ENCODE measurements at regions of chr11 and their contacts with region 1.

Region 1: DNA sequence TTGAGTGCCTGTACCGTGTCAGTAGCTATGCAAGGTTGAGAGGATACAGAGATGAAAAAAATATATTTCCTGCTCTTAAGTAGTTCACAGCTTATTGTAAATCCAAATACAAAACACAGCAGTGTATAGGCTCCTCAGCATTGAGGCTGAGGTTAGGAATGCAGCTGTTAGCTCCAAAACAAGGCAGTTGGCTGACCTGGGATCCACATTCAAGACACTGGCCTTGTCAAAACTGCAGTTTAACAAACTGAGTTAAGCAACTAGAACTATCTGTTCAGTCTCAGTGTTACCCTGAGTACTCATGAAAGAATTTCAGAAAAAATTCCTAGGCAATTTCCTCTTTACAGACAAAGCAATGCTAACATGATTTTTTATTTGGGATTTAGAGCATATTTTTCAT is 42.8 kb downstream of the REXO2 start:
- DNase-seq: peak; percentile 6
- H3K4me3 ChIP-seq: peak overlapping the region; percentile 24
- H3K27ac ChIP-seq: peak overlapping the region; percentile 35
- H3K4me1 ChIP-seq: peaks cover 23% of the 10 kb centered on the region
- CTCF ChIP-seq: no peak

Region 2: GRCh38 chr11:114340311-114341131 is 141.6 kb before region 1 on chr11:
- CTCF ChIA-PET with region 1: no interaction called
- POLR2A ChIA-PET with region 1: interaction called, 3 read pairs
- intact Hi-C with region 1: loop called (anchors 10 kb)
- DNase-seq: peak; percentile 72
- H3K4me3 ChIP-seq: no peak overlapping the region
- H3K27ac ChIP-seq: peak overlapping the region; percentile 39
- H3K4me1 ChIP-seq: peaks cover 10% of the 10 kb centered on the region
- CTCF ChIP-seq: peak; percentile 91

Region 3: GRCh38 chr11:114377612-114378267 is 104.4 kb before region 1 on chr11:
- CTCF ChIA-PET with region 1: no interaction called
- POLR2A ChIA-PET with region 1: no interaction called
- intact Hi-C with region 1: no loop called
- DNase-seq: no peak
- H3K4me3 ChIP-seq: no peak overlapping the region
- H3K27ac ChIP-seq: no peak overlapping the region
- H3K4me1 ChIP-seq: no peaks in the 10 kb centered on the region
- CTCF ChIP-seq: no peak

Region 4: GRCh38 chr11:114400217-114400914 is 81.7 kb before region 1 on chr11 and contains the starts of genes C11orf71 and RBM7:
- CTCF ChIA-PET with region 1: no interaction called
- POLR2A ChIA-PET with region 1: interaction called, 3 read pairs
- intact Hi-C with region 1: loop called (anchors 2 kb)
- DNase-seq: peak; percentile 99
- H3K4me3 ChIP-seq: peak within 1 kb of the TSS; percentile 79
- H3K27ac ChIP-seq: peak within 1 kb of the TSS; percentile 67
- H3K4me1 ChIP-seq: peaks cover 30% of the 10 kb centered on the region
- CTCF ChIP-seq: no peak
- total RNA-seq, gene C11orf71: 13.5 and 28.7 TPM in 2 replicates
- total RNA-seq, gene RBM7: 21.3 and 28.6 TPM in 2 replicates

Region 5: GRCh38 chr11:114598461-114598860 is 116.3 kb after region 1 on chr11:
- CTCF ChIA-PET with region 1: no interaction called
- POLR2A ChIA-PET with region 1: no interaction called
- intact Hi-C with region 1: no loop called
- DNase-seq: no peak
- H3K4me3 ChIP-seq: no peak overlapping the region
- H3K27ac ChIP-seq: no peak overlapping the region
- H3K4me1 ChIP-seq: no peaks in the 10 kb centered on the region
- CTCF ChIP-seq: no peak